Activated CD4-positive, alpha-beta memory T cell treated with anti-CD3 and anti-CD28 coated beads, Interleukin-2, amount 10 ng/mL, durations not matched to agents 7 days and 5 days (primary cell): ENCODE measurements at regions of chr2 and their contacts with region 1.

Region 1: GRCh38 chr2:143259368-143259958 is 130.2 kb downstream of the ARHGAP15 start:
- DNase-seq: peak; percentile 79
- H3K4me3 Mint-ChIP-seq: peak overlapping the region; percentile 71
- H3K27ac Mint-ChIP-seq: peak overlapping the region; percentile 99
- H3K4me1 Mint-ChIP-seq: peaks cover 81% of the 10 kb centered on the region
- H3K27me3 Mint-ChIP-seq: no peaks in the 10 kb centered on the region

Region 2: GRCh38 chr2:143110758-143111428 is 148.6 kb before region 1 on chr2:
- CTCF ChIA-PET with region 1: interaction called, 82 read pairs
- POLR2A ChIA-PET with region 1: interaction called, 33 read pairs
- DNase-seq: peak; percentile 73
- H3K4me3 Mint-ChIP-seq: peak overlapping the region; percentile 8
- H3K27ac Mint-ChIP-seq: peak overlapping the region; percentile 77
- H3K4me1 Mint-ChIP-seq: peaks cover 27% of the 10 kb centered on the region
- H3K27me3 Mint-ChIP-seq: peaks cover 4% of the 10 kb centered on the region

Region 3: DNA sequence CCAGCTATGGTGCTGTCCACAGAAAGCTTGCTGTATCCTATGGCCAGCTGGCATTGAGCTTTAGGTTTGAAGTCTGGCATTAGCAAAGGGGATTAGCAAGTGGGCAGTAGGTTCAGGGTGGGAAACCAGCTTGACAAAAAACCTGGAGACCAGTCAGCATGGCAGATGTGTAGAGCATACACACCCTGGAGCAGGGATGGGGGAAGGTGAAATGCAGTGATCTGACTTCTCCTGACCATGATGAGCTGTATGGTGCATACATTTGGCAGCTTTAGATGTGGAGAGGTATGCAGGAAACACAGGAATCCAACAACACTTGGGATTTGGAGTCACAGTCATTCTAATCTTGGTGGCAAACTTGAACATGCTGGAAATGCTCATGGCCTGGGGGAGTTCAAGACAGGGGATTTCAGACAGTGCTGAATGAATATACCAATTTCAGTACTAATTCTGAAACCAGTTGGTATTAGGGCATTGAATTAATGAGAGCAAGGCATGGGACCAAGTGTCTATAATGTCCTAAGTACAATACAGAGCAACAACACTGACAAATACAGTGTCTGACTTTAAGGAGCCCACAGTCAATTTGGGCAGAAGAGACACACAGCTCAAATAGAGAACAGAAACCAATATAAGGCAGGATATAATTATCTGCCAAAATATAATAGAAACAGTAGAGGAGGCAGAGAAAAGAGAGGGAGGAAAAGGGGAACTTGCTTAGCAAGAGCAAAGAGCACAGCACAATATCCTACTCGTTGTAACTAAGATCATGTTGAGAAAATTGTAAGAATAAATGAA is 118.4 kb before region 1 on chr2:
- CTCF ChIA-PET with region 1: interaction called, 4 read pairs
- POLR2A ChIA-PET with region 1: interaction called, 12 read pairs
- DNase-seq: no peak
- H3K4me3 Mint-ChIP-seq: no peak overlapping the region
- H3K27ac Mint-ChIP-seq: peak overlapping the region; percentile 14
- H3K4me1 Mint-ChIP-seq: peaks cover 85% of the 10 kb centered on the region
- H3K27me3 Mint-ChIP-seq: no peaks in the 10 kb centered on the region

Region 4: GRCh38 chr2:143205106-143205764 is 54.2 kb before region 1 on chr2:
- CTCF ChIA-PET with region 1: interaction called, 47 read pairs
- POLR2A ChIA-PET with region 1: interaction called, 22 read pairs
- DNase-seq: peak; percentile 16
- H3K4me3 Mint-ChIP-seq: no peak overlapping the region
- H3K27ac Mint-ChIP-seq: peak overlapping the region; percentile 72
- H3K4me1 Mint-ChIP-seq: peaks cover 47% of the 10 kb centered on the region
- H3K27me3 Mint-ChIP-seq: no peaks in the 10 kb centered on the region

Region 5: DNA sequence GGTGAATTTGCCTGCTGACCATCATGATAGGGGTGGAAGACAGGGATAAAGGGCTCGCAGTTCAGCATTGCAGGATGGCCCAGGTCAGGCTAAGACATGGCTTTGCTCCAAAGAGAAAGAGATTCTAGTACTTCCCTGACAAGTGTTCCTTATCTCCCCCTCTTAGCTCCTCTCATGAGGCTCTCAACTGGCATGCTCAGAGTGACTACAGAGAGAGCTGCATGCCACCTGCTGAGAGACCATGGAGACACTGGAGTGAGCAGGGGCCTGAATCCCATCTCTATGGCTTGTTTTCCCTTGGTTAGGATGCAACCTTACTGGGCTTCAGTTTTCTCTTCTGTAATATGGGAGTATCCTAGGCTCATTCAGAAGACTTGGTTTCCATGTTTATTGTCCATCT is 35.9 kb before region 1 on chr2:
- CTCF ChIA-PET with region 1: interaction called, 31 read pairs
- POLR2A ChIA-PET with region 1: interaction called, 13 read pairs
- DNase-seq: no peak
- H3K4me3 Mint-ChIP-seq: no peak overlapping the region
- H3K27ac Mint-ChIP-seq: no peak overlapping the region
- H3K4me1 Mint-ChIP-seq: peaks cover 48% of the 10 kb centered on the region
- H3K27me3 Mint-ChIP-seq: no peaks in the 10 kb centered on the region

Region 6: DNA sequence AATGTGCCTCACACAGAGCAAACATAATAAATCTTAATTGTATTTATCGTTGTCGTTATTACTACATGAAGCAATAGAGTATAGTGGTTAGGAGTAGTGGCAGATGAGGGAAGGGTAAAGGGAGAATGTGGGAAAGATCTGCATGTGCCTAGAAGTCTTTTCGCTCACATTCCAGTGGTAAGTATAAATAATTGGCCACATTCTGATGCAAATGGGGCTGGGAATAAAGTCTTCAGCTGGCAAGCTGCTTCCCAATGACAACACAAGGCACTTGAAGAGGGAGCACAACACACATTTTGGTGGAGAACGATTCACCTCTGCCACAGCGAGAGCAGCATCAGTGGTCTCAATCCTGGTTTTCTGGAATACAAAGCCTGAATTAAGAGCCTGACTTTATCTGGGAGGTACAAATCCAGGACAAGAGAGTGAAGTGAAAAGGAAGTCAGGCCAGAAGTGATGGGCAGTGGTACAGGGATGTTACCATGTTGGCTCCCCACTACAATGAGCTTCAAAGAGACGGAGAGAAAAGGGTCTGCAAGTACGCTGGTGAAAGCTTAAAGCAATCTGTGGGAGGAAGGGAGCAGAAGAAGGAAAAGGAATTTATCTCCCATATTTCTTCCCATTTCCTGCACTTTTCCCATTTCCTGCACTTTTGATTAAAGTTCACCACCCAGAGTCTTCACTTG is 17.9 kb before region 1 on chr2:
- CTCF ChIA-PET with region 1: interaction called, 12 read pairs
- POLR2A ChIA-PET with region 1: interaction called, 83 read pairs
- DNase-seq: no peak
- H3K4me3 Mint-ChIP-seq: no peak overlapping the region
- H3K27ac Mint-ChIP-seq: no peak overlapping the region
- H3K4me1 Mint-ChIP-seq: peaks cover 11% of the 10 kb centered on the region
- H3K27me3 Mint-ChIP-seq: no peaks in the 10 kb centered on the region

Region 7: DNA sequence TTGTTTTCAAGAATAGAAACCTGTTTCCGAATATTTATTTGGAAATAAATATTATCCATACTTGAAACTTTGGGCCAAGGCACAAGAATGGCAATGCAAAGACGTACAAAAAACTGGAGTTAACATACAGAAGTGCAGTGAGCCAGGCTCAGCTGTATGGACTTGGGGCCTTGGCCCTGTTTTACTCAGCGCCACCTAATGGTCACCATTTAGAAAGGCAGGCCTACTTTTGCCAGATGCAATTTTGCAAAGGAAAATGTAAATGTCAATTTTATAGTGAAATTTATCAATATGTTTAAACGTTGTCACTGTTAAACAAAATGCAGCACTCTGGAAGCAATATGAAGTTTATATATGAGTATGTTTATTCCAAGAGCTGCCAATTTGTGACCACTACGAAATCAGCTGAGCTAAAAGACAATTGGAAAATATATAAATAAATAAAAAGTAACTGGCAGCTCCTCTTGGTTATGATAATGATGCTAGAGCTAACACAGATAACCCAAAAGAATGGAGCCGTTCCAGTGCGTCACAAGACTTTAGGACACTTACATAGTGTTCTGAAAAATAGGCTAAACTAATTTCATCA is 24.7 kb after region 1 on chr2:
- CTCF ChIA-PET with region 1: interaction called, 19 read pairs
- POLR2A ChIA-PET with region 1: interaction called, 12 read pairs
- DNase-seq: no peak
- H3K4me3 Mint-ChIP-seq: no peak overlapping the region
- H3K27ac Mint-ChIP-seq: peak overlapping the region; percentile 22
- H3K4me1 Mint-ChIP-seq: peaks cover 13% of the 10 kb centered on the region
- H3K27me3 Mint-ChIP-seq: no peaks in the 10 kb centered on the region